HEK293 (cell line): ENCODE measurements at regions of chrX and their contacts with region 1.

Region 1: GRCh38 chrX:53317365-53318069 is 36.1 kb upstream of the IQSEC2 start:
- H3K4me3 ChIP-seq: no peak overlapping the region
- H3K27ac ChIP-seq: peak overlapping the region; percentile 38; the same call in 1 of the 2 replicates
- H3K4me1 ChIP-seq: peaks cover 32% of the 10 kb centered on the region
- CTCF ChIP-seq: peak; percentile 96

Region 2: GRCh38 chrX:53081925-53082772 is 235.4 kb before region 1 on chrX and contains the start of gene TSPYL2:
- CTCF ChIA-PET with region 1: no interaction called
- POLR2A ChIA-PET with region 1: no interaction called
- H3K4me3 ChIP-seq: peak within 1 kb of the TSS; percentile 69
- H3K27ac ChIP-seq: peak within 1 kb of the TSS; percentile 70
- H3K4me1 ChIP-seq: peaks cover 3% of the 10 kb centered on the region; the same call in 1 of the 2 replicates
- CTCF ChIP-seq: 0 out of 2 replicates have a peak, but pooled peaks have one; percentile 42

Region 3: GRCh38 chrX:53171356-53171755 is 146.2 kb before region 1 on chrX:
- CTCF ChIA-PET with region 1: no interaction called
- POLR2A ChIA-PET with region 1: no interaction called
- H3K4me3 ChIP-seq: no peak overlapping the region
- H3K27ac ChIP-seq: no peak overlapping the region
- H3K4me1 ChIP-seq: no peaks in the 10 kb centered on the region
- CTCF ChIP-seq: no peak

Region 4: GRCh38 chrX:53251307-53251706 is 66.2 kb before region 1 on chrX:
- CTCF ChIA-PET with region 1: interaction called, 26 read pairs
- POLR2A ChIA-PET with region 1: no interaction called
- H3K4me3 ChIP-seq: no peak overlapping the region
- H3K27ac ChIP-seq: no peak overlapping the region
- H3K4me1 ChIP-seq: no peaks in the 10 kb centered on the region
- CTCF ChIP-seq: no peak

Region 5: DNA sequence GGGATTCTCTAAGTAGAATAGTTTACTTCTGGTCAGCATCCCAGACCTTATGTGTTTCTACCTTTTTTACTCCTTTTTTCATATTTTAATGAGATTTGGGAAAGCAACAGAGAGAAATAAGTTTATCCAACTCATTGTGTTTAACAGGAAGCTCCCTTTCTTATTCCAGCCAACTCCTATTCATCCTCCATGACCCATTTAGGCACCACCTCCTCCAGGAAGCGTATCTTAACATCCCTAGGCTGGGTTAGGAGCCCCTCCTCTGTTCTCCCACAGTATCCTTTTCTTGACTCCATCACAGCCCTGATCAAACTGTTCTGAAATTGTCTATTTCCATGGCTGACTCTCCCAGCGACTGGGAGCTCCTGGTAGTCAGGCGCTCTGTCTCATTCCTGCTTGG is 17.4 kb before region 1 on chrX:
- CTCF ChIA-PET with region 1: interaction called, 59 read pairs
- POLR2A ChIA-PET with region 1: no interaction called
- H3K4me3 ChIP-seq: no peak overlapping the region
- H3K27ac ChIP-seq: no peak overlapping the region
- H3K4me1 ChIP-seq: no peaks in the 10 kb centered on the region
- CTCF ChIP-seq: no peak

Region 6: DNA sequence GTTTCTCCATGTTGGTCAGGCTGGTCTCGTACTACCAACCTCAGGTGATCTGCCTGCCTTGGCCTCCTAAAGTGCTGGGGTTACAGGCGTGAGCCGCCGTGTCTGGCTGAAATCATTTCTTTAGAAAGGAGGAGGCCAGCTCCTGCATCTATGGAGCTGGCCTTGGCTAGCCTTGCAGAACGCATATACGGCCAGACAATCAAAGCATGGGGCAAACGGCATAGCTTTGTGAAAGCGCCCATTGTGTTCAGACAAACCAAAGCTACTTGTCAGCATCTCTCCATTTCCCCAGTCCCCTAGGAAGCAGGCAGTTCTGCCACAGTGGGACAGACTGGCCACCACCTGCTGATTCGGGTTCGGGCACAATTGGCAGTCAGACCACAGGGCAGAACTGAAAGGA is 12.8 kb after region 1 on chrX:
- CTCF ChIA-PET with region 1: interaction called, 233 read pairs
- POLR2A ChIA-PET with region 1: interaction called, 3 read pairs
- H3K4me3 ChIP-seq: no peak overlapping the region
- H3K27ac ChIP-seq: no peak overlapping the region
- H3K4me1 ChIP-seq: no peaks in the 10 kb centered on the region
- CTCF ChIP-seq: no peak

Region 7: DNA sequence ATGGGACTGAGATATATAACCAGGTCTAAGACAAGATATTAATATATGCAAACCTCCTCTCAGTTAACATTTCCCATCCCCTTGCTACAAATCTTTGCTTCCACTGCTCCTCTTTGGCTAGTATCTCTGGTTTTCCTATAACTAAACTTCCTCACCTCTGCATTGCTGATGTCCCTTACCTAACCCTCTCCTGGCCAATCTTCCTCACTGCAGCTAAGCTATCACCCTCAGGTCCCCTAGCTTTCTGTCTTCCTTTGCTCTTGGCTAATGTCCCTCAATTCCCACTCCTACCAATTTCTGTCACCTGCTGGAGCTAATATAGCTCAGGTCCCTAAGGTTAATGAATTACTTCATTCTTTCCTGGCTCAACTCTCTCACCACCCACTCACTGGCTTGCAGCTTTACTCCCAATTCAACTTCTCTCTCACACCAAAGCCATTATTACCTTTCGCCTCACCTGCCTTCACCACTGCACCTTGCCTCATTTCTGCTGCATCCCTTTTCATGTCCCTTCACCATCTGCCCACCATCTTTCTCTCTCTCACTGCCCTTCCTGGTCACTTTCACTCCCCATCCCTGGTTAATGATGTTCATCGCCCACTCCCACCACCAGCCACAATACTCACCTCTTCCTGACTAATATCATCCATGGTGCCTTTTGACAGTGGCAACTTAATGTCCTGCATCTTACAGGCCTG is 78.2 kb after region 1 on chrX:
- CTCF ChIA-PET with region 1: interaction called, 19 read pairs
- POLR2A ChIA-PET with region 1: interaction called, 4 read pairs
- H3K4me3 ChIP-seq: no peak overlapping the region
- H3K27ac ChIP-seq: no peak overlapping the region; the same call in 1 of the 2 replicates
- H3K4me1 ChIP-seq: no peaks in the 10 kb centered on the region
- CTCF ChIP-seq: 0 out of 2 replicates have a peak, but pooled peaks have one; percentile 18

Region 8: DNA sequence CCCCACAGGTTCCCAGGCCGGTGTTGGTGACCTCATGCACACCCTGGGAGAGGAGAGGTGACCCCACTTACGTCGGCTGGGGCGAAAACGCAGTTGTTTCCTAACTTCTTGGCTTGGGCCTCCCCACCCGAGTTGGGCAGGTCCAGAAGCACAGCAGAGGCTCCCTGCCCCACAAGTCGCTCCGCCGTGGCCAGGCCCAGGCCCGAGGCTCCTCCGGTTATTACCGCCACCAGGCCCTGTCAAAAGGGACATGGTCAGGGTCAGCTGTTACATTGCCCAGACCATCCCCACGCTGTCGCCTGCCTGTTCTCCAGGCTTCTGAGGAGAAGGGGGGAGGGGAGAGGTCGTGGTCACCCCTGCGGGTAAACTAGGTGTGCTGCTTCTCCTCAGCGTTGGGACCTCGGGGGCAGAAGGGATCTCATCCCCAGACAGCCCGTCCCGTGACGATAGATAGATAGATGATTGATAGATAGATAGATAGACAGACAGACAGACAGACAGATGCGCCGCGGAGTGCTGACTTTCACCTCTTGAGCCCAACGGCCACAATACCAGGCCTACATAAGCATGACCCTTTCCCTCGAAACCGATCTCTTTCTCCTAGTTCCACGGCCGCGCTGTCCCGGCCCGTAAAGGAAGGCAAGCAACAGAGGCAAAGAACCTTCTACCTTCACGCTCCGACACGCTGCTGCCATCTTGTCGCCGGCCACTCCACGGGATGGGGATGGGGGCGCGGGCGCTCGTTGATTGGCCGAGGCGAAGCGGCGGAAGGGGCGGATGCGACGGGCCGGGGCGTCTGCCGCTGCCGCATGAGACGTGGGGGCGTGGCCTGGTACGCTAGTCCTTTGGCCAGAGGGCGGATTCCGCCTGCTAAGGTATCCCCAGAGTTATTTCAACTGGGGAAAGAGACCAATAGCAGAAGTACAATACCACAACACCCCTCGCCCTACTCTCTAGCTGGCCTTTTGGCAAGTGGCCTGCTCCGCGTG is 116.4 kb after region 1 on chrX and contains the start of gene HSD17B10:
- CTCF ChIA-PET with region 1: interaction called, 69 read pairs
- POLR2A ChIA-PET with region 1: interaction called, 3 read pairs
- H3K4me3 ChIP-seq: peak within 1 kb of the TSS; percentile 63
- H3K27ac ChIP-seq: peak within 1 kb of the TSS; percentile 38; the same call in 1 of the 2 replicates
- H3K4me1 ChIP-seq: no peaks in the 10 kb centered on the region
- CTCF ChIP-seq: no peak

Region 9: GRCh38 chrX:53481816-53482465 is 164.4 kb after region 1 on chrX:
- CTCF ChIA-PET with region 1: interaction called, 203 read pairs
- POLR2A ChIA-PET with region 1: interaction called, 4 read pairs
- H3K4me3 ChIP-seq: no peak overlapping the region
- H3K27ac ChIP-seq: no peak overlapping the region
- H3K4me1 ChIP-seq: no peaks in the 10 kb centered on the region
- CTCF ChIP-seq: peak; percentile 36; the same call in 1 of the 2 replicates